PC-9 (cell line): ENCODE measurements at regions of chr15 and their contacts with region 1.

Region 1: DNA sequence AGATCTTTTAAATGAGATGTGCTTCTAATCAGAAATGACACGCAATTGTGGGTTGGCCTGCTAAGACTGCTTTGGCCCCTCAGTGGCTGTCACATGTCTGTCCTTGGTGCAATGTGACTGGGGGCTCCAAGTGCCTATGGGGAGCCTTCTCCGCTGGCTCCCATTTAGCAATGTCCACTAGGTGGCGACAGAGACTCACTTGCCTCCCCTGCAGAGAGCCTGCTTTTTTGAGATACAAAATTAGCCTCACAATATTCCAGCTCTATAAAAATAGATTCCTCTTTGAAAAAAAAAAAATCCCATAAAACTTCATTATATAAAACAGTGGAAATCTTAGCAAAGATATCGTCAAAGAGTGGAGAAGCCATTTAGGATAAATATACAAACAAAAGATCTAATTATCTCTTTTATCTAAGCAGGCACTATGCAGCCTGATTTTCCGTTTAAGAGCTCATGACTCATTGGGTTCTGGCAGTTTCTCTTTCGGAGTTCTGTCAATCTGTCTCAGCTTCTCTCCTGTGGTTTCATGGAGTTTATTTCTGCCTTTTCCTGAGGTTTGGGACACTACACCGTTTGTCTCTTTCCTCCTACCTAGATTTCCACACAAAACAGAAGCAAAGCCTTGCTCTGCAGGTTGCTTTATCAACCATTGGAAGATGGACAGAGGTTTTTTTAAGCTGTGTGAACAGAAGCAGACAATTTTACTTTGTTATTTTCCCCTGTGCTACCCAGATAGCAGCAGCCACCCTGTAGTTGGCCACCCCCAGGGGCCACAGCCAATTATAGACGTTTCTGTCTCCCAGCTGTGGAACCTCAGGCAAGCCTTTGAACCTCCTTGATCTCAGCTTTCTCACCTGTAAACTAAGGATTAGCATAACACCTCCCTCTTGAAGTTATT is 68.4 kb upstream of the TNFAIP8L3 start:
- DNase-seq: peak in 1 of 2 experiments; percentile 58
- H3K4me3 ChIP-seq: no peak overlapping the region
- H3K27ac ChIP-seq: no peak overlapping the region
- H3K4me1 ChIP-seq: no peaks in the 10 kb centered on the region
- H3K27me3 ChIP-seq: no peaks in the 10 kb centered on the region
- CTCF ChIP-seq: peak; percentile 90

Region 2: DNA sequence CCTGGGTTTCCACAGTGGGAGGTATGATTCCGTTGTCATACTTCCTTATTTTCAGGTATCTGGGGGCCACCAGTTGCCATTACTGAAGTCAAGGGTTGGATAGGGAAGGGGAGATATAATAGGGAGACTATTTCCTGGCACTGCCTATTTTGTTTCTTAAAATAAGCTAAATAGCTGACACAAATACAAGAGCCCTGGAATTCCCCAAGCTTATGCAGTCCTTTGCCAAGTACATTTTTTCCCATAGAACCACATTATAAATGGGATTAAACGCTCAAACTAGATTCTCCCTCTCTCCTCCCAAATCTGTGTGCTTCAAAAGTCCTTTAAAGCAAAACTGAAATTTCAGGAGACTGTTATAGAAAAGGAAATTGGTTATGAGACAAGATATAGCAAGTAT is 186.0 kb before region 1 on chr15:
- CTCF ChIA-PET with region 1: no interaction called
- POLR2A ChIA-PET with region 1: no interaction called
- intact Hi-C with region 1: no loop called
- DNase-seq: no peak
- H3K4me3 ChIP-seq: no peak overlapping the region
- H3K27ac ChIP-seq: no peak overlapping the region
- H3K4me1 ChIP-seq: no peaks in the 10 kb centered on the region
- H3K27me3 ChIP-seq: no peaks in the 10 kb centered on the region
- CTCF ChIP-seq: no peak

Region 3: DNA sequence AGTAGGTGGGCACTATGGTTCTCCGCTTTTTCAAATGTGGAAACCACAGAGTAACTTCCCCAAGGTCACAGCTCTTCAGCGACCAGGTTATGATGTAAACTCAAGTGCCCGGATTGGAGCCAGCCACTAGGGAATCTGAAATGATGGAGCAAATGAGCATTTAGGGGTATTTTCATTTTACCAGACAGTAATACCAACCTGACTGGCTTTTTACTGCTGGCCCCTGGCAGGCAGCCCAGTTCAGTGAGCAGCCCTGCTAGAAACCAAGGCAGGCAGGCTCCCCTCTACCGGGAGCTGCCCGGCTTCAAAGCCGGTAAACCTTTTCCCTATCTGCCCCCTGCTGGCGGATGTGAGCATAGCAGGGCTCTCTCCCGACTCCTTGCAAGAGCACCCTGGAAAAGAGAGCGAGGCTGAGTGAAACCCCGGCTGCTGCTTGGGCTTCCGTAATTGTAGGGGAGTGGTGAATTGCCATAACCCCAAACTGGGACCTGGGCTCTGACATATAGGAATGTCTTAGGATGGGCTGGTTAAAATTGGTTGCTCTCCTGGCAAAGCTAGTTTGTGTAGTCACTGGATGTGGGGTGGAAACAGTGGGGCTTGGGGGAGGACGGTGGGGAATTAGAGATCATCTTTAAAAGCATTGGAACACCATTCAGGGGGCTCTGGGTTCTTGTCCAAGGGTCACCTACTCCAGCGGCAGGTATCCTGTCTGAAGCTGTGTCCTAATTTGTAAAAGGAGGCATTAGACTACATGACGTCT is 29.6 kb after region 1 on chr15:
- CTCF ChIA-PET with region 1: interaction called, 16 read pairs
- POLR2A ChIA-PET with region 1: no interaction called
- intact Hi-C with region 1: loop called (anchors 1 kb)
- DNase-seq: peak; percentile 49 to 77
- H3K4me3 ChIP-seq: no peak overlapping the region
- H3K27ac ChIP-seq: no peak overlapping the region
- H3K4me1 ChIP-seq: no peaks in the 10 kb centered on the region
- H3K27me3 ChIP-seq: no peaks in the 10 kb centered on the region
- CTCF ChIP-seq: peak; percentile 87

Region 4: GRCh38 chr15:51267703-51268083 is 104.6 kb after region 1 on chr15:
- CTCF ChIA-PET with region 1: no interaction called
- POLR2A ChIA-PET with region 1: no interaction called
- intact Hi-C with region 1: no loop called
- DNase-seq: peak in 1 of 2 experiments; percentile 18
- H3K4me3 ChIP-seq: no peak overlapping the region
- H3K27ac ChIP-seq: no peak overlapping the region
- H3K4me1 ChIP-seq: no peaks in the 10 kb centered on the region
- H3K27me3 ChIP-seq: peaks cover 18% of the 10 kb centered on the region; the same call in 1 of the 2 replicates
- CTCF ChIP-seq: no peak

Region 5: GRCh38 chr15:51295216-51295615 is 132.1 kb after region 1 on chr15:
- CTCF ChIA-PET with region 1: interaction called, 10 read pairs
- POLR2A ChIA-PET with region 1: no interaction called
- intact Hi-C with region 1: no loop called
- DNase-seq: no peak
- H3K4me3 ChIP-seq: no peak overlapping the region
- H3K27ac ChIP-seq: no peak overlapping the region
- H3K4me1 ChIP-seq: no peaks in the 10 kb centered on the region
- H3K27me3 ChIP-seq: peaks cover 4% of the 10 kb centered on the region
- CTCF ChIP-seq: no peak

Region 6: DNA sequence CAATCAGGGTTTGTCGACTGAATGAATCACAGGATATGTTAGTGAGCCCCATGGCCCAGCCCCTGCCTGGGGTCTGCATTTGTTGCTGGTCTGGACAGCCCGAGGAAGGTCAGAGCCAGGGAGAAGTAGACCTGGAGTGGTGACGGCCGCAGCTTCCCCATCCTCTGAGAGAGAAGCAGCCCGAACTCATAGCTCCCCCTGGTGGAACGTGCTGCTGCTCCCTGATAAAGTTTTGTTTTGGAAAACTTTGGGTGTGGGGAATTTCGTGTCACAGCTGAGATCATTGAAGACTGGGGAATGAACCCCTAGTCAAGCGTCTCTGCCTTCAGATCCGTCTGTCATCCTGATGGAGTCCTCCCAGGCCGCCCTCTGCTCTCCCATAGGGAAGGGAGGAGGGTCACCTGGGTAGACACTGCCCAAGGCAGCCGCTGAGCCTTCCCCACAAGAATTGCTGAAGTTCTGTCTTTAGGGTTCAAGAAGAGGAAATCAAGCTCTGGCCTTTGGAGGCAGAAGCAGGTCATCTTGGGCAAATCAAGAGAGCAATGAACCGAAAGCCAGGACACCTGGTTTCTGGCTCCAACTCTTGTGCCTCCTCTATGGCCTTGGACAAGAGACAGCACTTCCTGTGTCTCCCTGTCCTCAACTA is 238.9 kb after region 1 on chr15:
- CTCF ChIA-PET with region 1: no interaction called
- POLR2A ChIA-PET with region 1: no interaction called
- intact Hi-C with region 1: loop called (anchors 5 kb)
- DNase-seq: peak in 1 of 2 experiments; percentile 24
- H3K4me3 ChIP-seq: no peak overlapping the region
- H3K27ac ChIP-seq: no peak overlapping the region
- H3K4me1 ChIP-seq: no peaks in the 10 kb centered on the region
- H3K27me3 ChIP-seq: peaks cover 18% of the 10 kb centered on the region; the same call in 1 of the 2 replicates
- CTCF ChIP-seq: peak; percentile 54; the same call in 1 of the 2 replicates

Region 7: DNA sequence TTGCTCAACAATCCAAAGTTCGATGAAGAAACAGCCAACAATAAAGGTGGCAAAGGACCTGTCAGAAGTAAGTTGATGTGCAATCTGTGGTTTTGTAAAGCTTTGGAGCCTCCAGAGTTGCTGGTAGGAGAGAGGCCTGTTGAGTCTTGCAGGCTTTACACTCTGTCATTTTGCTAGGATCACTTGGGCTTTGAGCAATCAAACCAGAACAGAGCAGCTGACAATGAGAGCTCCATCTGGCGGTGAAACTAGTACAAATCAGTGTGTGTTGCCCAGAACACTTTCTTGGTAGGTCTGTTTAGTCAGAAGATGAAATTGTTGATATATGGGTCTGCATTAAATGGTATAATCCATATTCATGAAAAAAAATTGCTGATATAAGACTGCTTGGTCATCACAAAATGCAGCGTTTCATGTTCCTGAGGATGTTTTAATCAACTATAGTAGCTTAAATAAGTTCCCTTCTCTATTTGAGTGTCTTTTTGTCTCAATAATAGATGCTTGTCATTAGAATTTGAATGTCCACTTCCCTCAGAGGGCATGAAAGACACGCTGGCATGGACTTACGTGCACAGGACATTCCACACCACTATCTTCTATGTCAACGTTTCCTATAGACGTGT is 613.9 kb after region 1 on chr15:
- CTCF ChIA-PET with region 1: no interaction called
- POLR2A ChIA-PET with region 1: no interaction called
- intact Hi-C with region 1: loop called (anchors 5 kb)
- DNase-seq: peak; percentile 57 to 61
- H3K4me3 ChIP-seq: no peak overlapping the region
- H3K27ac ChIP-seq: no peak overlapping the region
- H3K4me1 ChIP-seq: peaks cover 11% of the 10 kb centered on the region
- H3K27me3 ChIP-seq: no peaks in the 10 kb centered on the region
- CTCF ChIP-seq: peak; percentile 72